OCI-LY7 (cell line): ENCODE measurements at regions of chr18 and their contacts with region 1.

Region 1: GRCh38 chr18:54766619-54767018 is 61.7 kb upstream of the RAB27B start:
- DNase-seq: no peak
- H3K4me3 ChIP-seq: no peak overlapping the region
- H3K27ac ChIP-seq: no peak overlapping the region
- H3K4me1 ChIP-seq: no peaks in the 10 kb centered on the region
- CTCF ChIP-seq: no peak

Region 2: DNA sequence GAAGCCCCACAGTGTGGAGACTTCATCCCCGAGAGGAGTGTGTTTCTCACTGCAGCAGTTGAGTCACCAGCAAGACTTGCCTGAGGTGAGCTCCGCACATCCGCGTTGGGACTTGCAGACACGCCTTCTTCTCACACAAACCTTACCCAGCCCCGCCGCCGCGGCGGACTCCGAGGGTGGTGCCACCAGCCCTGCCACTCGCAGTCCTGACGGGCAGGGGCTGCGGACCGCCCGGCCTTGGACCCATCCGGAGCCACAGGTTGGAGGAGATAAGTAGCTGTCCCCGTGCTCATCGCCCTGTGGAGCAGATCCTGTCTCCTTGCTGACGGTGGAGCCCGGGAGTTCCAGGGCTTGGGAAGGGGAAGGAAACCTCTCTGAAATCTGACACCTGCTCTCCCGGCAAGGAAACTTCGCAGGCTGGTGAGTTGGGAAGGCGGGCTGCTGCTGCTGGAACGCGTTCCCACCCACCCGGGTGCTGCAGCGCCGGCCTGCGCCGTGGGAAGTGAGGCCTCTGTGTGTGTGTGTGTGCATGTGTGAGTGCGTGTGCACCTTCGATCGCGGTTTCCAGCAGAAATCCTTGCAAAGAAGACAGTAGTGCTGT is 61.8 kb after region 1 on chr18 and contains the start of gene RAB27B:
- CTCF ChIA-PET with region 1: no interaction called
- POLR2A ChIA-PET with region 1: no interaction called
- intact Hi-C with region 1: loop called (anchors 2 kb)
- DNase-seq: no peak
- H3K4me3 ChIP-seq: no peak within 1 kb of the TSS
- H3K27ac ChIP-seq: no peak within 1 kb of the TSS
- H3K4me1 ChIP-seq: no peaks in the 10 kb centered on the region
- CTCF ChIP-seq: no peak
- total RNA-seq, gene RAB27B: not detected in 2 replicates